ENCODE measurements at regions of chr2 and their contacts with region 1.

Region 1: GRCh38 chr2:79041032-79041448 is 15.5 kb downstream of the REG3G start:
- DNase-seq: no peak
- ATAC-seq: peak; percentile 68; the same call in 2 of the 3 replicates
- H3K4me3 ChIP-seq: no peak overlapping the region
- H3K27ac ChIP-seq: no peak overlapping the region
- H3K4me1 ChIP-seq: no peaks in the 10 kb centered on the region
- H3K27me3 ChIP-seq: no peaks in the 10 kb centered on the region
- CTCF ChIP-seq: peak in 2 of 3 experiments; percentile 26 to 31; a peak in 4 of 6 replicates
- EP300 ChIP-seq: no peak
- POLR2A ChIP-seq: no peak
- RAD21 ChIP-seq: 0 out of 2 replicates have a peak, but pooled peaks have one; percentile 14

Region 2: GRCh38 chr2:79071078-79071477 is 30.0 kb after region 1 on chr2:
- CTCF ChIA-PET with region 1: no interaction called
- POLR2A ChIA-PET with region 1: no interaction called
- RAD21 ChIA-PET with region 1: no interaction called
- SMC1A ChIA-PET with region 1: no interaction called
- in situ Hi-C with region 1: no loop called
- intact Hi-C with region 1: no loop called
- DNase-seq: no peak
- ATAC-seq: no peak
- H3K4me3 ChIP-seq: no peak overlapping the region
- H3K27ac ChIP-seq: no peak overlapping the region
- H3K4me1 ChIP-seq: no peaks in the 10 kb centered on the region
- H3K27me3 ChIP-seq: no peaks in the 10 kb centered on the region
- CTCF ChIP-seq: no peak
- EP300 ChIP-seq: no peak
- POLR2A ChIP-seq: no peak
- RAD21 ChIP-seq: no peak

Region 3: GRCh38 chr2:79219383-79219988 is 178.4 kb after region 1 on chr2:
- CTCF ChIA-PET with region 1: interaction called, 8 read pairs
- POLR2A ChIA-PET with region 1: no interaction called
- RAD21 ChIA-PET with region 1: interaction called, 3 read pairs
- SMC1A ChIA-PET with region 1: interaction called, 5 read pairs
- in situ Hi-C with region 1: no loop called
- intact Hi-C with region 1: loop called (anchors 1 kb)
- DNase-seq: peak; percentile 8
- ATAC-seq: peak; percentile 79
- H3K4me3 ChIP-seq: no peak overlapping the region
- H3K27ac ChIP-seq: no peak overlapping the region
- H3K4me1 ChIP-seq: no peaks in the 10 kb centered on the region
- H3K27me3 ChIP-seq: no peaks in the 10 kb centered on the region
- CTCF ChIP-seq: peak; percentile 68 to 78 (median 70)
- EP300 ChIP-seq: no peak
- POLR2A ChIP-seq: no peak
- RAD21 ChIP-seq: peak; percentile 66

Region 4: DNA sequence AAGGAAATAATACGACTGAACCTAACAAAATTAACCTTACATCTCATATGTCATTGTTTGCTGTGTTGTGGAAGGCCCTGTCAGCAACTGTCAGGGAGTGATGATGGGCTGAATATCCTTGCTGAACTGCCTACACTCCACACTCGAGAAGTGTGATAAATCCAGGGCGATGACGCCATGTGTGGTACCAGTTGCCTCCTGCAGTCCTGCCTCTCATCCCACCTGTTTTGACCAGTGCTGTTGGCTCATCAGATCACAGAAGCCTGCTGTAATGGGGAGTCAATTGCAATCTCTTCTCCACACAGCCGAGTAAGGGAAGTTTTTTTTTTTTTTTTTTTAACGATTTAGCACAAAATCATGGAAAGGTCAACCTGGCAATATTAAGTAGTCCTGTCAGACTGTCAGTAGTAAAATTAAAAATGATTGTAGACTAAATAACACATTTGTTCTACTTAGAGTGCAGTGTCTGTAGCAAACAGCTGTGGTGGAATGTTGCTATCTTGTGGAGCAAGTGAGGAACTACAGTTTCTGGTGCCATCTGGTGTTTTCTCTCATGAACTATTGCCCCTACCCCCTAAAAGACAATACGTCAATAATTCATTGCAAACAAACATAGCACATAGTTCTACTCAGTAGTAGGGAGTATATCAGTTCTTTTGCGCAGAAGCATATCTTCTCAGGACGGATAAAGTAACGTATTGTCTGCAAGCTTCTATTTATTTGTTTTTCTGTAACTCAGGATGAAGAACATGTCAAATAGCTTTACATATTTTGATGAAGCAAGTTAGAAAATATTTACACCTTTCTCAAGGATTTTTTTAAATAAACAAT is 819.4 kb after region 1 on chr2:
- CTCF ChIA-PET with region 1: no interaction called
- POLR2A ChIA-PET with region 1: no interaction called
- RAD21 ChIA-PET with region 1: no interaction called
- SMC1A ChIA-PET with region 1: no interaction called
- in situ Hi-C with region 1: loop called (anchors 25 kb)
- intact Hi-C with region 1: no loop called
- DNase-seq: no peak
- ATAC-seq: peak; percentile 74
- H3K4me3 ChIP-seq: no peak overlapping the region
- H3K27ac ChIP-seq: no peak overlapping the region
- H3K4me1 ChIP-seq: no peaks in the 10 kb centered on the region
- H3K27me3 ChIP-seq: no peaks in the 10 kb centered on the region
- CTCF ChIP-seq: peak in 2 of 3 experiments; percentile 39 to 43; a peak in 2 of 6 replicates
- EP300 ChIP-seq: no peak
- POLR2A ChIP-seq: no peak
- RAD21 ChIP-seq: peak; percentile 29; the same call in 1 of the 2 replicates

Measured in GM12878 (cell line).